CD4-positive, alpha-beta memory T cell (primary cell): ENCODE measurements at regions of chr12 and their contacts with region 1.

Region 1: DNA sequence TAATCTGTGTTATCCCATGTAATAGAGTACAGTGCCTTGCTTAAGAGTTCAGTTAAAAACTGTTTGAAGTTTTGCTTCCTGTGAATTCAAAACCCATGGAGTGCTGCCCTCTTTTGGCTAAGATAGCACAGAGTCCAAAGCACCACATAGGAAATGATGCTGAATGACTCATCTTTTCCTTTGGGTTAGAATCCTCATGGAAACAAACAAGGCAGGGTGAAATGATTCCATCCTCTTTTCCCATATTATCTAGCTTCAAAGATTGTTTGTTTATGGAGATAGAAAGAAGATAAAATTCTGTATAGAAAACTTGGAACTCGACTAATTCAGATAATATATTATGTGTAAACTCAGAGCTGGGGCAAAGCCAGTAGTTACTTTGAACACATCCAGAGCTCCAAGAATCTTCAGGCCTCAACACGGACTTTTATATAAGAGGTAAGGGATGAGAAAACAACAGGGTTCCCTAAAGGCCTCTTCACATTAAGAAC is 87.4 kb downstream of the OTOGL start:
- DNase-seq: peak; percentile 35 to 41 (median 39)
- H3K4me3 ChIP-seq: no peak overlapping the region
- H3K4me3 Mint-ChIP-seq: no peak overlapping the region
- H3K27ac ChIP-seq: no peak overlapping the region
- H3K27ac Mint-ChIP-seq: no peak overlapping the region
- H3K4me1 ChIP-seq: no peaks in the 10 kb centered on the region
- H3K4me1 Mint-ChIP-seq: no peaks in the 10 kb centered on the region
- H3K27me3 ChIP-seq: no peaks in the 10 kb centered on the region
- H3K27me3 Mint-ChIP-seq: peaks cover 0 to 2% of the 10 kb centered on the region in 2 donors

Region 2: GRCh38 chr12:79547735-79548609 is 638.8 kb before region 1 on chr12:
- CTCF ChIA-PET with region 1: no interaction called
- POLR2A ChIA-PET with region 1: no interaction called
- intact Hi-C with region 1: loop called (anchors 2 kb)
- DNase-seq: peak in 2 of 5 donors; percentile 5 to 6
- H3K4me3 ChIP-seq: no peak overlapping the region
- H3K4me3 Mint-ChIP-seq: no peak overlapping the region
- H3K27ac ChIP-seq: no peak overlapping the region
- H3K27ac Mint-ChIP-seq: no peak overlapping the region
- H3K4me1 ChIP-seq: no peaks in the 10 kb centered on the region
- H3K4me1 Mint-ChIP-seq: no peaks in the 10 kb centered on the region
- H3K27me3 ChIP-seq: no peaks in the 10 kb centered on the region
- H3K27me3 Mint-ChIP-seq: peaks cover 0 to 3% of the 10 kb centered on the region in 2 donors

Region 3: DNA sequence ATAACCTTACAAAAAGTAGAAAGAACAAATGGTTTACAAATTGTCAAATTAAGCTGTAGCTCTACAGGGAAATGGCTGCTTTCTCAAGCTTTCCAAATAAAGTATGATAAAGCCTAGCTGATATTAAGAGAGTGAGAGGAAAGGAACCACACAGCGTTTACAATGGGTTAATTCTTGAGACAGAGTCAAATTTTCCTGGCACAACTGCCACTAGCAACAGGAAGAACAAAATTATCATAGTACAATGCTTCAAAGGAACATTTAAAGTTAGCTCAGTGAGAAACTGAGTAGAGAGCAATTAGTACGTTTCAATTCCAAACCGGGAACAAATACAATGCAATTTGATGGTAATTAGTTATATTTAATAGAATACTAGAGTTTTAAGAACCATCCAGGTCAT is 367.9 kb before region 1 on chr12:
- CTCF ChIA-PET with region 1: interaction called, 4 read pairs
- POLR2A ChIA-PET with region 1: no interaction called
- intact Hi-C with region 1: loop called (anchors 10 kb)
- DNase-seq: no peak
- H3K4me3 ChIP-seq: no peak overlapping the region
- H3K4me3 Mint-ChIP-seq: no peak overlapping the region
- H3K27ac ChIP-seq: no peak overlapping the region
- H3K27ac Mint-ChIP-seq: peak overlapping the region in 1 of 7 donors; percentile 12
- H3K4me1 ChIP-seq: no peaks in the 10 kb centered on the region
- H3K4me1 Mint-ChIP-seq: peaks cover 5 to 15% (median 10%) of the 10 kb centered on the region in 4 donors
- H3K27me3 ChIP-seq: no peaks in the 10 kb centered on the region
- H3K27me3 Mint-ChIP-seq: no peaks in the 10 kb centered on the region

Region 4: GRCh38 chr12:79886917-79887519 is 299.8 kb before region 1 on chr12:
- CTCF ChIA-PET with region 1: interaction called, 5 read pairs
- POLR2A ChIA-PET with region 1: no interaction called
- intact Hi-C with region 1: loop called (anchors 1 kb)
- DNase-seq: peak in 4 of 5 donors; percentile 35 to 50 (median 38)
- H3K4me3 ChIP-seq: no peak overlapping the region
- H3K4me3 Mint-ChIP-seq: peak overlapping the region in 1 of 8 donors; percentile 2
- H3K27ac ChIP-seq: no peak overlapping the region
- H3K27ac Mint-ChIP-seq: no peak overlapping the region
- H3K4me1 ChIP-seq: peaks cover 71% of the 10 kb centered on the region
- H3K4me1 Mint-ChIP-seq: peaks cover 55 to 84% (median 68%) of the 10 kb centered on the region in 4 donors
- H3K27me3 ChIP-seq: no peaks in the 10 kb centered on the region
- H3K27me3 Mint-ChIP-seq: no peaks in the 10 kb centered on the region

Region 5: DNA sequence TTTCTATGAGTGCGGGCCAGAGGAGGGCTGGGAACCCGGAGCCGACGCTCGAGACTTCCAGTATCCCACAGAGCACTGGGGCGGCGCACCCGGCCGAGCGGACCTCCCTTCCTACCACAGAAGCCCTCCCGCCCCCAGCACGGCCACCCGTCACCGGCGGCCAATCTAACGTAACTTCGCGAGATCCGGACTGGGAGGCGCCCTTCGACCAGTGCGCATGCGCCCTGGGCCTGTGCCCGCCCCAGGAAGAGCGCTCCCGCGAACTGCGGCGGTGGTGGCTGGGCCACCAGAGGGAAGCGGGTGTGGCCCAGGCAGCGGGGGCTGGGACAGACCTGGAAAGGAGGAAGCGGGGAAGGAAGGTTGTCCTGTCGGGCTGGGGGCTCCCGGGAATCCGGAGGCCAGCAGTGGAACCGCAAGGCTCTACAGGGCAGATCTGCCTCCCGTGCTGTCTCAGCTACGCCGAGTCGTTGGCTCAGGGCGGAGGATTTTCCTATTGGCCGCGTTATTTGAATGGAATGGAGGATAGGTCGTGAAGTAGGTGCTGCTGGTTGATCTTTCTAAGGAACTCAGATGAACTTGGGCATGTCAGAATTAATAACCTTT is 251.7 kb before region 1 on chr12 and contains the start of gene PPP1R12A:
- CTCF ChIA-PET with region 1: interaction called, 12 read pairs
- POLR2A ChIA-PET with region 1: no interaction called
- intact Hi-C with region 1: loop called (anchors 2 kb)
- DNase-seq: peak; percentile 94 to 96 (median 95)
- H3K4me3 ChIP-seq: peak within 1 kb of the TSS; percentile 80 to 90
- H3K4me3 Mint-ChIP-seq: peak within 1 kb of the TSS; percentile 91 to 100 (median 96)
- H3K27ac ChIP-seq: peak within 1 kb of the TSS; percentile 91
- H3K27ac Mint-ChIP-seq: peak within 1 kb of the TSS; percentile 89 to 99 (median 98)
- H3K4me1 ChIP-seq: peaks cover 38% of the 10 kb centered on the region
- H3K4me1 Mint-ChIP-seq: peaks cover 28 to 60% (median 40%) of the 10 kb centered on the region in 4 donors
- H3K27me3 ChIP-seq: no peaks in the 10 kb centered on the region
- H3K27me3 Mint-ChIP-seq: no peaks in the 10 kb centered on the region
- total RNA-seq, gene PPP1R12A: 127 to 129 TPM

Region 6: GRCh38 chr12:80053048-80053790 is 133.6 kb before region 1 on chr12:
- CTCF ChIA-PET with region 1: interaction called, 8 read pairs
- POLR2A ChIA-PET with region 1: no interaction called
- intact Hi-C with region 1: loop called (anchors 1 kb)
- DNase-seq: no peak
- H3K4me3 ChIP-seq: no peak overlapping the region
- H3K4me3 Mint-ChIP-seq: no peak overlapping the region
- H3K27ac ChIP-seq: no peak overlapping the region
- H3K27ac Mint-ChIP-seq: no peak overlapping the region
- H3K4me1 ChIP-seq: no peaks in the 10 kb centered on the region
- H3K4me1 Mint-ChIP-seq: peaks cover 4 to 9% (median 5%) of the 10 kb centered on the region in 4 donors
- H3K27me3 ChIP-seq: no peaks in the 10 kb centered on the region
- H3K27me3 Mint-ChIP-seq: peaks cover 1 to 4% of the 10 kb centered on the region in 2 donors

Region 7: GRCh38 chr12:80129895-80130530 is 56.8 kb before region 1 on chr12:
- CTCF ChIA-PET with region 1: no interaction called
- POLR2A ChIA-PET with region 1: no interaction called
- intact Hi-C with region 1: no loop called
- DNase-seq: no peak
- H3K4me3 ChIP-seq: no peak overlapping the region
- H3K4me3 Mint-ChIP-seq: no peak overlapping the region
- H3K27ac ChIP-seq: no peak overlapping the region
- H3K27ac Mint-ChIP-seq: no peak overlapping the region
- H3K4me1 ChIP-seq: no peaks in the 10 kb centered on the region
- H3K4me1 Mint-ChIP-seq: no peaks in the 10 kb centered on the region
- H3K27me3 ChIP-seq: no peaks in the 10 kb centered on the region
- H3K27me3 Mint-ChIP-seq: peaks cover 1 to 6% of the 10 kb centered on the region in 2 donors

Region 8: GRCh38 chr12:80198782-80199355 is 12.1 kb after region 1 on chr12:
- CTCF ChIA-PET with region 1: interaction called, 10 read pairs
- POLR2A ChIA-PET with region 1: no interaction called
- intact Hi-C with region 1: no loop called
- DNase-seq: no peak
- H3K4me3 ChIP-seq: no peak overlapping the region
- H3K4me3 Mint-ChIP-seq: no peak overlapping the region
- H3K27ac ChIP-seq: no peak overlapping the region
- H3K27ac Mint-ChIP-seq: no peak overlapping the region
- H3K4me1 ChIP-seq: no peaks in the 10 kb centered on the region
- H3K4me1 Mint-ChIP-seq: no peaks in the 10 kb centered on the region
- H3K27me3 ChIP-seq: no peaks in the 10 kb centered on the region
- H3K27me3 Mint-ChIP-seq: peaks cover 0 to 9% of the 10 kb centered on the region in 2 donors

Region 9: DNA sequence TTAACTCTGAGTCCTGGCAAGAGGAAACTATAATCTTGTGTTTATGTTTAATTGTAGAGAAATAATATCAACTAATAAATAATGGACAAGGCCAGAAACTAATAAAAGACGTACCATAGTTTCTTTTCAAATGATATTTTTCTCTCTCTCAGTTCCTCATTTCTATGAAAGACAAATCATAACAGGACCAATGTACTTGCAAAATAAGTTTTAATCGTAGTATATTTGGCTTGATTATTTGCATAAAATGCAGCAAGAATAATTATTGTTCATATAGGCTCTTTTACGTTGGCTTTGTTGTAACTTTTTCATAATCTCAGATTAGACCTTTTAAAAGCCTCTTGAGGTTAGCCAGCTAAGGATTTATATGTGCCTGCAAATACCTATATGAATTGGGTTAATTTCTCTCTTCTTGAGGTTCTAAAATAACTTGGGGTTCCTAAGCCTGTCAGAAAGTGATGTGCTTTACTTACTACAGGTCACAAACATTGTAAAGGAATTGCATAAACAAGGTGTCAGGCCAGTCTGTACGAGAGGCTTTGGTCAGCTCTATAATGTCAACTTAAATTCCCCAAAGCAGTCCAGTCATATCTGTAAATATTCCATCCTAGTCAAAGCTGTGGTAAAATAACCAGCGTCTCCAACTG is 104.5 kb after region 1 on chr12:
- CTCF ChIA-PET with region 1: no interaction called
- POLR2A ChIA-PET with region 1: no interaction called
- intact Hi-C with region 1: no loop called
- DNase-seq: no peak
- H3K4me3 ChIP-seq: no peak overlapping the region
- H3K4me3 Mint-ChIP-seq: no peak overlapping the region
- H3K27ac ChIP-seq: no peak overlapping the region
- H3K27ac Mint-ChIP-seq: no peak overlapping the region
- H3K4me1 ChIP-seq: no peaks in the 10 kb centered on the region
- H3K4me1 Mint-ChIP-seq: no peaks in the 10 kb centered on the region
- H3K27me3 ChIP-seq: no peaks in the 10 kb centered on the region
- H3K27me3 Mint-ChIP-seq: peaks cover 0 to 1% of the 10 kb centered on the region in 2 donors

Region 10: GRCh38 chr12:80946594-80946993 is 759.8 kb after region 1 on chr12:
- CTCF ChIA-PET with region 1: no interaction called
- POLR2A ChIA-PET with region 1: no interaction called
- intact Hi-C with region 1: no loop called
- DNase-seq: no peak
- H3K4me3 ChIP-seq: no peak overlapping the region
- H3K4me3 Mint-ChIP-seq: no peak overlapping the region
- H3K27ac ChIP-seq: no peak overlapping the region
- H3K27ac Mint-ChIP-seq: no peak overlapping the region
- H3K4me1 ChIP-seq: no peaks in the 10 kb centered on the region
- H3K4me1 Mint-ChIP-seq: no peaks in the 10 kb centered on the region
- H3K27me3 ChIP-seq: no peaks in the 10 kb centered on the region
- H3K27me3 Mint-ChIP-seq: no peaks in the 10 kb centered on the region